GM13976 (cell line): ENCODE measurements at regions of chr11 and their contacts with region 1.

Region 1: DNA sequence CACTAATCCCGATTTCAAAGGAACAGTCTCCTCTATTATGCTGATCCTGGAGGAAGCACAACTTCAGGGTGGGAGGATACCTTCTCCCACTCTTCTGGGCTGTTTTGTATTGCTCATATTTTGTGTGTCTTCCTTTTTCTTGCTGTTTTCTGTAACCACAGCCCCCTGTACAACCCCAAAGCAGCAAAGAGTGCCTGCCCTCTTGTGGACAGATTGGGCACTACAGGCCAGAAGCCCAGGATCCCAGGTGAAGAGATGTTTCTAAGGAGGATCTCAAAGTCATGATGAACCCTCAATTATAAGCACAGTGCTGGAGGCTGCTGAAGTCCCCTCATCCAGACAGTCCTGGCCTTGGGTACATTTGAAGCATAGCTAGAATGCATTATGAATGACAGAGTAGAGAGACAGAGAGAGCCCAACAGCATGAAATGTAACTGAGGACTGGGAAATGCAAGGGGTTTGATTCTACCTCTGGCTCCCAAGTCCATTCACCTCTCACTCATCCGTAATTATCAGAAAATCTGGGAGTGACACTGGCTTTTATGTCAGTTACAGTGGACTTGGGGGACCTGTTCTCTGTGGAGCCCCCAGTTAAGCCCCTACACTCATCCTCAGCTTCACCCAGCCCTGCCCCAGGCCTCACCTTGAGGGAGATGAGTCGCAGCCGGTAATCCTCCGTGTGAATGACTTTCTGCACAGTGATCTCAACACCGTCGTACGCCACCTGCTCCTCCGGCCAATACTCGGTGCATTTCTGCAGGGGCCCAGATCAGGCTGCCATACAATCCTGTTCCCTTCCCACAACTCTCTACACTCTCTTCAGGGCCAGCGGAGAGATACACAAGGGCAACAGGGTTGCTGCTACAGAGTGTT is 6.2 kb upstream of the IGSF22 start:
- DNase-seq: peak; percentile 79
- CTCF ChIP-seq: peak; percentile 98

Region 2: GRCh38 chr11:18243783-18244362 is 488.3 kb before region 1 on chr11:
- in situ Hi-C with region 1: loop called (anchors 25 kb)
- DNase-seq: peak; percentile 52
- CTCF ChIP-seq: peak; percentile 86

Region 3: DNA sequence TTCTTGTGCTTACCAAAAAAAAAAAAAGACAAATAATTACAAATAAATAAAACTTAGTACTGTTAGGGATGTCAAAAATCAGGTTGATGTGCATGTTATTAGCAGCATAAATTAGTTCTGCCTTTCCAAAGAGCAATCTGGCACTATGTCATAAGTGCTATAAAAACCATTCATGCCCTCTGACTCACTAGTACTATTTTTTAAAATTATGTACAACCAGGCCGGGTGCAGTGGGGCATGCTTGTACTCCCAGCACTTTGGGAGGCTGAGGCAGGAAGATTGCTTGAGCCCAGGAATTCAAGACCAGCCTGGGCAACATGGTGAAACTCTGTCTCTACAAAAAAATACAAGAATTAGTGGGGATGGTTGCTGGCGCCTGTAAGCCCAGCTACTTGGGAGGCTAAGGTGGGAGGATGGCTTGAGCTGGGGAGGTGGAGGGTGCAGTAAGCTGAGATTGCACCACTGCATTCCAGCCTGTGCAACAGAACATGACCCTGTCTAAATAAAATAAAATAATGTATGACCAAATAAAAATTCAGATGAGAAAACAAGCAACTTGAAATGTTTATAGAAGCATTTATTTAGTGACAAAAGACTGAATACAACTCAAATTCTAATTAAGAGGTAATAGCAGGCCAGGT is 169.0 kb before region 1 on chr11:
- in situ Hi-C with region 1: loop called (anchors 10 kb)
- DNase-seq: no peak
- CTCF ChIP-seq: no peak